ENCODE measurements at regions of chr16 and their contacts with region 1.

Region 1: GRCh38 chr16:75110637-75111513 is 5.7 kb downstream of the LDHD start:
- DNase-seq: peak; percentile 88
- H3K4me3 Mint-ChIP-seq: no peak overlapping the region
- H3K27ac Mint-ChIP-seq: peak overlapping the region; percentile 52
- H3K4me1 Mint-ChIP-seq: peaks cover 57% of the 10 kb centered on the region
- H3K27me3 Mint-ChIP-seq: peaks cover 17% of the 10 kb centered on the region

Region 2: GRCh38 chr16:74813109-74813641 is 297.7 kb before region 1 on chr16:
- CTCF ChIA-PET with region 1: interaction called, 26 read pairs
- DNase-seq: peak; percentile 80
- H3K4me3 Mint-ChIP-seq: no peak overlapping the region
- H3K27ac Mint-ChIP-seq: no peak overlapping the region
- H3K4me1 Mint-ChIP-seq: no peaks in the 10 kb centered on the region
- H3K27me3 Mint-ChIP-seq: peaks cover 17% of the 10 kb centered on the region

Region 3: GRCh38 chr16:74843719-74844433 is 267.0 kb before region 1 on chr16:
- CTCF ChIA-PET with region 1: no interaction called
- DNase-seq: no peak
- H3K4me3 Mint-ChIP-seq: no peak overlapping the region
- H3K27ac Mint-ChIP-seq: no peak overlapping the region
- H3K4me1 Mint-ChIP-seq: no peaks in the 10 kb centered on the region
- H3K27me3 Mint-ChIP-seq: peaks cover 10% of the 10 kb centered on the region

Region 4: DNA sequence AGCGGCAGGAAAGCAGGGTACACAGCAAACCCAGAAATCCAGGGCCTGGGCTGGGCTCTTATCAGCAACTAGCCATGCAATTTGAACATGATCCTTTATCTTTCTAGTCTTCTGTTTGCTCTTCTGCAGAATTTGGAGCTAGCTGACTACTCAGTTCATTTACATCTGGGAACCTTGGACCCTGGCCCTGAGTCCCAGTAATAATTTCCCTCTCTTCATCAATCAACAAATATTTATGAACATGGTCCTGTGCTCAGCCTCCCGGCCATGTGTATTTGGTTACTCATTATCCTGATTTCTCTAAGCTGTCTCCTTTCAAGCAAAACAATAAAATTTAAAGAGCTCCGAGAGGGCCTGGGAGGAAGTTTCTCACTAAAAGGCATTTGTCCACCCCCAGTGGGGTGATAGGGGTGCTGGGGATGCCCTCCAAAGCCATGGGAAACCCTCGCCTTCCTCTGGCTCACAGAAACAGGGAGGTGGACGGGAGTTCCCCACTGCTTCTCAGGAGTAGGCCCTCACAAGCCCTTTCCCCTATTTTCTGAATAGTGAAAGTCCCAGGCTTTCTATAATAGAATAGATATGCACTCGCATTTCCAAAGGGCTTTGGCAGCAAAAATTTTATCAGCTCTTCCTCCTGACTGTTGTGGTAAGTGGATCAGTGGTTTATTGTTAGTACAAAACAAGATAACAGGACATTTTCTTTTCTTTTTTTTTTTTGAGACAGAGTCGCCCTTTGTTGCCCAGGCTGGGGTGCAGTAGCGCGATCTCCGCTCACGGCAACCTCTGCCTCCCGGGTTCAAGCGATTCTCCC is 119.1 kb before region 1 on chr16:
- CTCF ChIA-PET with region 1: interaction called, 135 read pairs
- DNase-seq: no peak
- H3K4me3 Mint-ChIP-seq: no peak overlapping the region
- H3K27ac Mint-ChIP-seq: no peak overlapping the region
- H3K4me1 Mint-ChIP-seq: no peaks in the 10 kb centered on the region
- H3K27me3 Mint-ChIP-seq: peaks cover 35% of the 10 kb centered on the region

Region 5: GRCh38 chr16:75064403-75065148 is 46.3 kb before region 1 on chr16:
- CTCF ChIA-PET with region 1: interaction called, 24 read pairs
- DNase-seq: peak; percentile 46
- H3K4me3 Mint-ChIP-seq: peak overlapping the region; percentile 38
- H3K27ac Mint-ChIP-seq: peak overlapping the region; percentile 84
- H3K4me1 Mint-ChIP-seq: peaks cover 33% of the 10 kb centered on the region
- H3K27me3 Mint-ChIP-seq: no peaks in the 10 kb centered on the region

Region 6: DNA sequence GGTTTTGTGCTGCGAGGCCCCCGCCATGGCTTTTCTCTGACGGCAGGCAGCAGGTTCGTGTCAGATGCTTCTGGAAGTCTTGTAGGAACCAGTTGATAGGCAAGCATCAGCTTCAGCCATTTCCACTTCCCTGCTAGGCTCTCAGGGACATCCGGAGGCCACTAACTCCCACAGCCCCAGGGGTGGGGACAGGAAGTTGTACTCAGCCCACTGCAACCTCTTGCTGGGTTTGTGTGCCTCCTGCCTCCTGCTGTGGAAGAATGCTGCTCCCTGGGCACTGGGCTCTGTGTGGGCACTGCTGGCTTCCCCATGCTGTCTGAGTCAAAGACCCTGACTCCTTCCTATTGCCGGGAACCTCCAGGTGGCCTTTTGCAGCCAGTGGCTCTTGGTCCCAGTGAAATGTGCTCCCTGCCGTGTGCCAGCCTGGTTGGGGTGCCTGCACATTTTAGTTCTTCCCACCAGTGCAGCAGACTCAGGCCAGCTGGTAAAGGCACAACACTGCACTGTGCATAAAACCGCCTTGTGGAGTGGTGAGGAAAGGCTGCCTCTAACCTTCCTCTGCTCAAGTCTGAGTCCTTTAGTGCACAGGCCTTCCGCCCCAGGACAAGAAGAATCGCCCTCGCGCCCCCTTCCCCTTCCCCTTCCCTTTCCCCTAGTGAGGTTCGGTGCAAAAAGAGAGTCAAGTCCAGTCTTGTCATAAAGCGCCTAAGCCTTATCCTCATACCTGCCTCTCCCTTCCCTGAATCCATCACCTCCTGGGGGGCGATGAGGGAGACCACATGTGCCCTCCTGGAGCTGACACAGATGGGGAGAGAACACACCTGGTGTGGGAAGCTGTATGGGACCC is 10.9 kb before region 1 on chr16:
- CTCF ChIA-PET with region 1: interaction called, 52 read pairs
- DNase-seq: peak; percentile 66
- H3K4me3 Mint-ChIP-seq: no peak overlapping the region
- H3K27ac Mint-ChIP-seq: peak overlapping the region; percentile 82
- H3K4me1 Mint-ChIP-seq: peaks cover 47% of the 10 kb centered on the region
- H3K27me3 Mint-ChIP-seq: peaks cover 4% of the 10 kb centered on the region